Prostate gland (tissue), 2 donors: ENCODE measurements at regions of chr10 and their contacts with region 1.

Region 1: DNA sequence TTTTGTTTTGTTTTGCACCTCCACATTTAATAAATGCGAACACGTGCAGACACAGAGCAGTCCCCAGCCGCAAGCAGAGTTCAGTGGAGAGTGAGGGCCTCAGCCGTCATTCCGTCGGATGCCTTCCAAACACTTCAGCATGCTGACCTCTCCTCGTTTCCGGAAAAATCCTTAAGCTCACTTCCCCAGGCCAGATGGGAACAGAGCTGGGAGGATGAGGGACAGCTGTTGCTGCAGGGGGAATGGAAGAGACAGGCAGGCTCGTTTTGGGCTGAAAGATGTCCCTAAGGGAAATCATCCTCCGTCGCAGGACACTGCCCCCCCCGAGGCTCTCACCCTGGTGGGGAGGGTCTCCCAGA is 17.2 kb upstream of the FGFR2 start:
- DNase-seq: no peak
- H3K4me3 ChIP-seq: no peak overlapping the region
- H3K27ac ChIP-seq: no peak overlapping the region
- H3K4me1 ChIP-seq: no peaks in the 10 kb centered on the region
- H3K27me3 ChIP-seq: no peaks in the 10 kb centered on the region
- CTCF ChIP-seq: no peak
- POLR2A ChIP-seq: no peak

Region 2: GRCh38 chr10:121516093-121516865 is 99.1 kb before region 1 on chr10:
- intact Hi-C with region 1: no loop called
- DNase-seq: no peak
- H3K4me3 ChIP-seq: no peak overlapping the region
- H3K27ac ChIP-seq: no peak overlapping the region
- H3K4me1 ChIP-seq: no peaks in the 10 kb centered on the region
- H3K27me3 ChIP-seq: no peaks in the 10 kb centered on the region
- CTCF ChIP-seq: no peak
- POLR2A ChIP-seq: no peak

Region 3: DNA sequence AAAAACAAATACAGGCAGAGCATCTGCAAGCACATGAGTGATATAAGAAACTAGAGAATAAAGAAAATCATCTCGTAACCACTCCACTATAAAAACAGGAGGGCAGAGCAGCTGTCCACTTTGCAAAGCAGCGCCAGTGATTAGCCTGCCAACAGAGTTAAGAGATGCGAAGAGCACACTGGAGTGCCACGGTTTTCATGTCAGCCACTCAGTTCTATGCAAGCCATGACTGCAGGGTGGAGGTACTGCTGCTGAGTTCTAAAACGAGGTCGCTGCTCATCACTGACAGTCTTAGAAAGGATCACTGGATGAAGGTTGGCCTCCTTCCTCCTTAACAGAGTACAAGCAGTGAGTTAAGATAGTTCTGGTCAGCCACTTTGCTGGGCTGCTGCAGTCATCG is 75.6 kb before region 1 on chr10:
- intact Hi-C with region 1: no loop called
- DNase-seq: no peak
- H3K4me3 ChIP-seq: no peak overlapping the region
- H3K27ac ChIP-seq: no peak overlapping the region
- H3K4me1 ChIP-seq: no peaks in the 10 kb centered on the region
- H3K27me3 ChIP-seq: no peaks in the 10 kb centered on the region
- CTCF ChIP-seq: no peak
- POLR2A ChIP-seq: no peak

Region 4: GRCh38 chr10:121899727-121900126 is 284.3 kb after region 1 on chr10:
- intact Hi-C with region 1: loop called (anchors 10 kb)
- DNase-seq: no peak
- H3K4me3 ChIP-seq: no peak overlapping the region
- H3K27ac ChIP-seq: no peak overlapping the region
- H3K4me1 ChIP-seq: no peaks in the 10 kb centered on the region
- H3K27me3 ChIP-seq: no peaks in the 10 kb centered on the region
- CTCF ChIP-seq: no peak
- POLR2A ChIP-seq: no peak